Mammary epithelial cell (primary cell): ENCODE measurements at regions of chr5 and their contacts with region 1.

Region 1: GRCh38 chr5:28473531-28474107 is 1435.2 kb upstream of the CDH9 start:
- DNase-seq: peak; percentile 8
- H3K4me3 ChIP-seq: no peak overlapping the region
- H3K27ac ChIP-seq: no peak overlapping the region
- H3K4me1 ChIP-seq: no peaks in the 10 kb centered on the region
- H3K27me3 ChIP-seq: no peaks in the 10 kb centered on the region
- CTCF ChIP-seq: peak in 1 of 2 donors; percentile 8

Region 2: GRCh38 chr5:28329177-28329576 is 144.4 kb before region 1 on chr5:
- CTCF ChIA-PET with region 1: no interaction called
- dilution Hi-C with region 1: no loop called
- in situ Hi-C with region 1: no loop called
- intact Hi-C with region 1: no loop called
- DNase-seq: no peak
- H3K4me3 ChIP-seq: no peak overlapping the region
- H3K27ac ChIP-seq: no peak overlapping the region
- H3K4me1 ChIP-seq: no peaks in the 10 kb centered on the region
- H3K27me3 ChIP-seq: no peaks in the 10 kb centered on the region
- CTCF ChIP-seq: no peak

Region 3: DNA sequence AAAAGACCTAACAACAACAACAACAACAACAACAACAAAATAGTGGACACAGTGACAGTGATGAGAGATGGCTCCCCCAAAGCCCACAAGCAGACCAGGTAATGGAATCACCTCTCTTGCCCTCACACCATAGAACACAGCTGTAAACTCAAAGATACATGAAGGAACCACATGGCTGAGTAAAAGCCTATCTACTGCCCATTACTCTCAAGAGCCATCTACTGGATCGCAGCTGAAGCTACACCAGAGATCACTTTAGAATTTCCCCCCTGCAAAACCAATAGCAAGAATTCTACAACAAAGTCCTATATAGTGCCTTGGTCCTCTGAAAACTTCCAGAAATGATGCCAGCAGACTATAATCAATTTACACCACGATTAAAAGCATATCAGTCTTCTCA is 102.4 kb after region 1 on chr5:
- CTCF ChIA-PET with region 1: no interaction called
- dilution Hi-C with region 1: no loop called
- in situ Hi-C with region 1: no loop called
- intact Hi-C with region 1: loop called (anchors 10 kb)
- DNase-seq: peak; percentile 17
- H3K4me3 ChIP-seq: no peak overlapping the region
- H3K27ac ChIP-seq: no peak overlapping the region
- H3K4me1 ChIP-seq: no peaks in the 10 kb centered on the region
- H3K27me3 ChIP-seq: no peaks in the 10 kb centered on the region
- CTCF ChIP-seq: peak; percentile 6 to 56

Region 4: GRCh38 chr5:29114331-29114768 is 640.7 kb after region 1 on chr5:
- CTCF ChIA-PET with region 1: no interaction called
- dilution Hi-C with region 1: no loop called
- in situ Hi-C with region 1: no loop called
- intact Hi-C with region 1: no loop called
- DNase-seq: no peak
- H3K4me3 ChIP-seq: no peak overlapping the region
- H3K27ac ChIP-seq: no peak overlapping the region
- H3K4me1 ChIP-seq: no peaks in the 10 kb centered on the region
- H3K27me3 ChIP-seq: no peaks in the 10 kb centered on the region
- CTCF ChIP-seq: no peak